KBM-7 (cell line): ENCODE measurements at regions of chr10 and their contacts with region 1.

Region 1: DNA sequence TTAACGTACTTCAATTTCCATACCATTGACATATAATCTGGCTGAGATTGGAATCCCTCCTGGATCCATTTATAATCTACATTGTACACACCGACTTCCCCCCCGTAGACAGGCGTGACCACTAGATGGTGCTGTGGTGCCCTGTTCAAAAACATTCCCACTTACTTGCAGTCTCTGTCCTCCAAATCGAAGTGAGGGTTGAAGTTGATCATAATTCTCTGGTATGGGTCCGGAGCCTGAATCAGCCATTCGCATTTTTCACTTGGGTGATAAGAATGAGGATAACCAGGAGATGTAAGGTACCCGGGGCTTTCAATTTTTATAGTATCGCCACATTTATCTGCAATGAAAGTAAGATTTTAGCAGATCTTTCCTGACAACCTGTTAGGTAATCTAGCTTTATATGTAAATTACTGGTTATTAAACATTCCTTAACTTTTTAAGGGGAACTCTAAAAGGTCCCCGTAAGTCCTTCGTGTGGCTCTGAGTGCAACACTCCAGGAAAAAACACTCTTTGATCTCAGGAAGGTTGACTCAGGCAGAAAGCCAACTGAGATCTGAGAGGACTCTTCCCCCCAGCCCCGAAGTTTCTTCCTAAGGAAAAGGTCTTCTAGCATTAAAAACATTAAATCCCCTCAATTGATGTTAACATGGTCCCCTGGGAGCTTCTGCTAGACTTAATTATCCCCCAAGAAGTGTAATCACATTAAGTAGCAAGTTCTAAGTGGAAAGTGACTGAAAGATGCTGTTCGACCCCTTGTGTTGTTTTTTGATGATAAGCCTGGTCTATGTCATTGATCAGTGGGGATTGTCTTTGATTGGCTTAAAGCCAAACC is 3.7 kb downstream of the NRP1 start:
- DNase-seq: peak; percentile 86

Region 2: GRCh38 chr10:33460505-33461294 is 129.9 kb after region 1 on chr10:
- in situ Hi-C with region 1: no loop called
- DNase-seq: no peak

Region 3: GRCh38 chr10:34637418-34637911 is 1306.7 kb after region 1 on chr10:
- in situ Hi-C with region 1: loop called (anchors 25 kb)
- DNase-seq: peak; percentile 71